Activated naive CD4-positive, alpha-beta T cell treated with anti-CD3 and anti-CD28 coated beads for 36 hours (primary cell): ENCODE measurements at regions of chr1 and their contacts with region 1.

Region 1: GRCh38 chr1:148334339-148335130 is 148.6 kb downstream of the PPIAL4G start:
- DNase-seq: peak; percentile 92
- H3K4me3 Mint-ChIP-seq: peak overlapping the region; percentile 94
- H3K27ac Mint-ChIP-seq: peak overlapping the region; percentile 100
- H3K4me1 Mint-ChIP-seq: peaks cover 31% of the 10 kb centered on the region
- H3K27me3 Mint-ChIP-seq: peaks cover 11% of the 10 kb centered on the region

Region 2: GRCh38 chr1:148296524-148296923 is 38.0 kb before region 1 on chr1:
- CTCF ChIA-PET with region 1: no interaction called
- intact Hi-C with region 1: no loop called
- DNase-seq: no peak
- H3K4me3 Mint-ChIP-seq: no peak overlapping the region
- H3K27ac Mint-ChIP-seq: no peak overlapping the region
- H3K4me1 Mint-ChIP-seq: peaks cover 5% of the 10 kb centered on the region
- H3K27me3 Mint-ChIP-seq: peaks cover 3% of the 10 kb centered on the region

Region 3: DNA sequence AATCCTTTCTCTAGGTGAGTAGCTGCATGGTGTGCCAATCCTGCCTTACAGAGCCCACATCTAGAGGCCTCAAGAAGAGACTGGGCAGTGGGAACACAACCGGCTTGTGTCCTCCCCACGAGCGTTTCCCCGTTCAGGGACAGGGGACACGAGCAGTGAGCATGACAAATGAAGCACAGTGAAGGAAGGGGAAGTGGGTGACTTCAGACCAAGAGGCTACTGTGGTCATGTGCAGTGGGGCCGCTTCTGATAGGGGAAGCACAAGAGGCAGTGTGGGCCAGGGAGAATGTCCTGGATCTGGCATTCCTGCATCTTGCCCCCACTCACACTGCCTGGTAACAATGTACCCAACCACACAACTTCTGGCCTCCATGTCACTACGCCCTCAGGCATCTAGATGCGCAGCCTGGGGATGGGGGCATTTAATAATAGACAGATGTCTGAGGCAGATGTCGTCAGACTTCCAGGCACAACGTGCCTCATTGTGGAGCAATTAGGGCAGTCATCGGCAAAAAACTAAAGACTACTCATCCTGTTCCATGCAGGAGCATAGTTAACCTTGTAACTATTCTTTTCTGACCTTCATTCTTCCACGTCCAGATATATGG is 26.8 kb before region 1 on chr1:
- CTCF ChIA-PET with region 1: no interaction called
- intact Hi-C with region 1: loop called (anchors 1 kb)
- DNase-seq: no peak
- H3K4me3 Mint-ChIP-seq: no peak overlapping the region
- H3K27ac Mint-ChIP-seq: no peak overlapping the region
- H3K4me1 Mint-ChIP-seq: peaks cover 27% of the 10 kb centered on the region
- H3K27me3 Mint-ChIP-seq: peaks cover 29% of the 10 kb centered on the region

Region 4: GRCh38 chr1:148353461-148354283 is 19.1 kb after region 1 on chr1:
- CTCF ChIA-PET with region 1: no interaction called
- intact Hi-C with region 1: loop called (anchors 1 kb)
- DNase-seq: peak; percentile 72
- H3K4me3 Mint-ChIP-seq: peak overlapping the region; percentile 63
- H3K27ac Mint-ChIP-seq: peak overlapping the region; percentile 73
- H3K4me1 Mint-ChIP-seq: peaks cover 15% of the 10 kb centered on the region
- H3K27me3 Mint-ChIP-seq: peaks cover 32% of the 10 kb centered on the region

Region 5: GRCh38 chr1:148372731-148373130 is 38.2 kb after region 1 on chr1:
- CTCF ChIA-PET with region 1: interaction called, 4 read pairs
- intact Hi-C with region 1: loop called (anchors 1 kb)
- DNase-seq: peak; percentile 82
- H3K4me3 Mint-ChIP-seq: peak overlapping the region; percentile 75
- H3K27ac Mint-ChIP-seq: peak overlapping the region; percentile 98
- H3K4me1 Mint-ChIP-seq: peaks cover 55% of the 10 kb centered on the region
- H3K27me3 Mint-ChIP-seq: no peaks in the 10 kb centered on the region